Heart right ventricle (tissue), 16 donors: ENCODE measurements at regions of chr5 and their contacts with region 1.

Region 1: DNA sequence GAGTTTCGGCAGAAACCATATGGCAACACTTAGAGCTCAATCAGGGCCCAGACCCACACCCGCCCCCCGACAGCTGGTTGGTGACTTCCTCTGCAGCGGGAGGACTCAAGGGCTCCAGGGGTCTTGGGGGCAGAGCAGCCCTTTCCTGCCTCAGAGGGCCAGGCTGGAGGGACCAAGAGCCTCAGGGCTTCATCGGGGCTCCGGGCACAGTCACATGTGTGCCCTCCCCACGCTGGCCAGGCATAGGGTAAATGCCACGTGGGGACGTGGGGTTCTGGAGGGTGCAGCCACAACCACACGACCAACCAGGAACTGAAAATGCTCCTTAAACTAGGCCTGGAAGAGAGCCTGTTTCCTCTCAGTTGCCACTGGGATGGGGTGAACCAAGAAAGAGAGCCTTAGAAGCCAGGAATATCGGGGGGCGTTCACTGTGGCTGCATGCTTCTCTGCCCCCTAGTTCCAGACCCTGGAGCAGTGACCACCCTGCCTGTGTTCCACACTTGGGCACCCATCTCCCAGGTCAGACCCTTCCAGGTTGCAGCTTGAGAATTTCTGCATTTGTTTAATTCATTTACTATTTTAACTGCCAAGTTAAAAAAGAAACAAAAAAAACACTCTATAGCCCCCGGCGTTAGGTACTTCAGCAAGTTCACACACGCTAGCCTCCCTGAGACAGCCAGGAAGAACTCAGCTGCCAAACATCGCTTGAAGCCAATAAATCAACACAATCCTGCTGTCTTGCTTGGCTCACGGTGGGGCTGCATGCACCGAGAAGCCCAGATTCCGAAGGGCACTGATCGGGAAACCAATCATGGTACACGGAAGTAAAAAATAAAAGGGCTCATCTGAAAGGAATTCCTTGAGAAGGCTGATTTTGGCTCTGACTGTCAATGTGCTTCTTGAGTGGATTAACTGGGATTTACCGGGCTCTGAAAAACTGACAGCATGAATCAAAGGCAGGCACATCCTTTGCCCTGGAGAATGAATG is 56.1 kb upstream of the PHYKPL start:
- DNase-seq: peak in 1 of 2 donors; percentile 7
- ATAC-seq: peak in 1 of 8 donors; percentile 13
- H3K4me3 ChIP-seq: no peak overlapping the region
- H3K27ac ChIP-seq: no peak overlapping the region
- H3K4me1 ChIP-seq: peaks cover 0 to 14% (median 7%) of the 10 kb centered on the region in 9 donors
- H3K27me3 ChIP-seq: peaks cover 0 to 55% (median 11%) of the 10 kb centered on the region in 7 donors
- CTCF ChIP-seq: no peak

Region 2: DNA sequence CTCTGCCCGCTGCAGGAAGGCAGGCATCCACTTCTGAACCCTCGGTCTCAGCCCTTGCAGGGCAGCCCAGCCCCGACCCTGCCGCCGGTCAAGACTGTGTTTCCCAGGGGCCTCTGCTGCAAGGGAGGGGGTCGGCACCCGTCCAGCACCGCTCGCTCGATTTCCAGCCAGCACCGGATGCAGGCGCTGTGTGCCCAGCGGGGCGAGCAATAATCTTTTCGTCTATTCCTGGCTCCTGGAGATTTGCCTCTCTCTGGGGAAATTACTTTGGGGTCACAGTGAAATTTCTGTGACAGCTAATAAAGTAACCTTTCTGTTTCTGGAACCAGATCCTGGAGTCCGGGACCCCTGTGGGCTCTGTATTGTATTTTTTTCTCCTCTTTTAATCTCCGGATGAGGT is 146.2 kb after region 1 on chr5:
- intact Hi-C with region 1: loop called in 1 of 10 experiments (anchors 5 kb)
- DNase-seq: peak; percentile 54 to 72
- ATAC-seq: peak; percentile 78 to 91 (median 84)
- H3K4me3 ChIP-seq: peak overlapping the region in 1 of 10 donors; percentile 11
- H3K27ac ChIP-seq: peak overlapping the region in 2 of 10 donors; percentile 20 to 33
- H3K4me1 ChIP-seq: peaks cover 0 to 17% (median 7%) of the 10 kb centered on the region in 9 donors
- H3K27me3 ChIP-seq: no peaks in the 10 kb centered on the region
- CTCF ChIP-seq: peak in 3 of 9 donors; percentile 28 to 30 (median 29)